ENCODE measurements at regions of chr3 and their contacts with region 1.

Region 1: GRCh38 chr3:196837819-196838420 is 29.8 kb upstream of the SENP5 start:
- DNase-seq: peak; percentile 83
- CTCF ChIP-seq: peak; percentile 88

Region 2: GRCh38 chr3:196969660-196970546 is 132.0 kb after region 1 on chr3:
- in situ Hi-C with region 1: loop called (anchors 10 kb)
- DNase-seq: peak; percentile 91
- CTCF ChIP-seq: peak; percentile 96

Region 3: GRCh38 chr3:197186887-197187588 is 349.1 kb after region 1 on chr3:
- in situ Hi-C with region 1: loop called (anchors 25 kb)
- DNase-seq: peak; percentile 34
- CTCF ChIP-seq: peak; percentile 73